Cardiac septum (tissue), 1 donor: ENCODE measurements at regions of chr16 and their contacts with region 1.

Region 1: DNA sequence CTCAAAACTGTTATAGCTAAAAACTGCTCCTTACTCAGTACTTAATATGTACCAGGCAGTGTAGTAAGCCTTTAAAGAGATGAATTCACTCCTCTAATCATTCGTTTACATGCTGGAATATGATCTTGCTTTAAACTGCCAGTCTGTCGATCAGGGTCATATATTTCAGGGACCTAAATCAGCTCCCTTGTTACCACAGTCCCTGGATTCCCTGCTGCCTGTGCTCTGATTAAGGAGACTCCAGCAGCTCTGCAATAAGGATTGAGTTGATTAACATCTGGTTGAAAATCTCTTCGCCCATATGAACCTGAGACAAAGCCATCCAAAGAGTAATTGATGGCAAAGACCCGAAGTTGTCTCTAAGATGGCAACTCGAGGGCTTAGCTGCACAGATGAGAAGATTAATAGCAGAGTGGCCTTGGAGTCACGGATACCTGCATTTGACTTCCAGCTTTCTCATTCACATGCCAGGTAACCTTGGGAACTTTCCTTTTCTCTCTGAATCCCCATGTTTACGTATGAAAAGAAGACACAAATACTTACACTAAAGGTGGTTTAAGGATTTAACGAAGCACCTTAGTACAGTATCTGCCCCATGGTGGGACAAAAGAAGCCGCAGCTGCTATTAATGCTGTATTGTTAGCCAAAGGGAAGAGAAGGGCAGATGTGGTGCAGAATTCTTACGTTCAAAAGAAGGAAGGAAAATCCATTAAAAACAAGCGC is 68.2 kb downstream of the VAT1L start:
- DNase-seq: no peak

Region 2: DNA sequence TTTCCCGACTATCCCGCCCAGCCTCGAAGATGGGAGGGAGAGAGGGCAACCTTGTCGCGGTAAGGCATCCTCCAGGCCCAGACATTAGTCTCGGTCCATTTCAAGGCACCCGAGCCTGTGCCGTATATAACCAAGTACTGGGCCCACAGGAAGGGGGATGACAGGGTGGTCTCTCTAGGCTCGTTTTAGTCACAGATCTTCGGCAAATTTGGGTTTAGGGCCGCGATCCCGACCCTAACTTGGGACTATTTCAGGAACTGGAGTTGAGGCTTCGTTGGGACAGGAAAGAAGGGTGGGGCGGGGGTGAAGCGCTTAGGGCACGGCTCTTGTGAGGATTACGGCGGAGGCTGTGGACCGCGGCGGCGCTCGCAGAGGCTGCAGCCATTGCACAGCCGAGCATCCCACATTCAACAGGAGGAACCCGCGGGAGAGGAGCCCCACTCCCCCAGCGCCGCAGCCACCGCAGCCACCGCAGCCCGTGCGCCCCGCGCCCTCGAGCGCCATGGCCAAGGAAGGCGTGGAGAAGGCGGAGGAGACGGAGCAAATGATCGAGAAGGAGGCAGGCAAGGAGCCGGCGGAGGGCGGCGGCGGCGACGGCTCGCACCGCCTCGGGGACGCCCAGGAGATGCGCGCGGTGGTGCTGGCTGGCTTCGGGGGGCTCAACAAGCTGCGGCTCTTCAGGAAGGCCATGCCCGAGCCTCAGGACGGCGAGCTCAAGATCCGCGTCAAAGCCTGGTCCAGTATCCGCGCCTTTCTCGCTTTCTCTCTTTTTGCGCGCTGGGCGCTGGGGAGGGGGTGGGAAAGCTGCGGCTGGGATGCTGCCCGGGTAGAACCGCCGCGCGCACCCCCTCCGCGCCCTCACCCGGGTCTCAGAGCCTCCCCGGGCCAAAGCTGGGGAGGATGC is 68.2 kb before region 1 on chr16 and contains the start of gene VAT1L:
- intact Hi-C with region 1: loop called (anchors 2 kb)
- DNase-seq: no peak
- total RNA-seq, gene VAT1L: 49.4 TPM